ENCODE measurements at regions of chr3 and their contacts with region 1.

Region 1: GRCh38 chr3:160038862-160039562 is 50.4 kb downstream of the IL12A start:
- DNase-seq: peak; percentile 37
- ATAC-seq: peak; percentile 52 to 72

Region 2: GRCh38 chr3:160399125-160400029 is 360.4 kb after region 1 on chr3 and contains the starts of genes IFT80 and SMC4:
- intact Hi-C with region 1: loop called in 1 of 2 experiments (anchors 10 kb)
- DNase-seq: peak; percentile 96
- ATAC-seq: peak; percentile 98 to 99
- total RNA-seq, gene IFT80: 11.6 to 13.6 TPM
- total RNA-seq, gene SMC4: 11.1 to 19.4 TPM

Measured in left cardiac atrium (tissue), 4 donors.